CD14-positive monocyte (primary cell): ENCODE measurements at regions of chr6 and their contacts with region 1.

Region 1: GRCh38 chr6:134640975-134641429 is 308.9 kb downstream of the ALDH8A1 start:
- DNase-seq: peak; percentile 97 to 99 (median 97)
- H3K4me3 ChIP-seq: no peak overlapping the region
- H3K4me3 Mint-ChIP-seq: no peak overlapping the region
- H3K27ac ChIP-seq: peak overlapping the region; percentile 58 to 76
- H3K27ac Mint-ChIP-seq: peak overlapping the region; percentile 84 to 98 (median 92)
- H3K4me1 ChIP-seq: peaks cover 12 to 14% of the 10 kb centered on the region in 2 donors
- H3K4me1 Mint-ChIP-seq: peaks cover 15% of the 10 kb centered on the region
- H3K27me3 ChIP-seq: no peaks in the 10 kb centered on the region
- H3K27me3 Mint-ChIP-seq: peaks cover 0 to 2% (median 2%) of the 10 kb centered on the region in 3 donors
- CTCF ChIP-seq: peak; percentile 93

Region 2: DNA sequence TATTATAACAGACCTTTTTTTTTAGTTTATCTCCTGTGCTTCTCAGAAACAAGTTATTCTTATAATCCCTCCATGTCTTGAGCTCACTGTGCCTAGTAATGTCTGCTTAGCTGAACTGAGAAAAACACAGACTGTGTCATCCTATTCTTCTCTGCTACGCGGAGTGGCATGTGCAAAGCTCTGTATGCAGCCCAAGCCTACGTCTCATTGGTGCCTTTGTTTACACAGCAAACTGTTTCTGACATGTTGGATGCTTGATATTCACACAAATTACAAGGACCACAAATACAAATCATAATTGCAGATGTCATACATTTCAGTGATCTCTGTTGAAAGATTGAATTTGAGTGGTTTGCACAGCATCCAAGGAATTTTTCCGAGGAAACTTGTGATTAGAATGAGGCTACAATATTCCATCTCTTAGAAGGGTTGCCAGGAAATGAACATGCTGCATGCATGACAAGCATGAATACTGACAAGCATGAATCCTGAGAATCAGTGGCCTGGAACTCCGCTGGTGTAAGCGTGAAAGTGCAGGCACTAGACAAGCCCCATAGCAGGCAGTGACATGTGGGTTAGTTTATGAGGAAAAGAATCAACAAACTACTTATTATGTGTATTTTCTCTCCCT is 194.7 kb before region 1 on chr6:
- intact Hi-C with region 1: loop called in 1 of 2 experiments (anchors 10 kb)
- DNase-seq: no peak
- H3K4me3 ChIP-seq: no peak overlapping the region
- H3K4me3 Mint-ChIP-seq: no peak overlapping the region
- H3K27ac ChIP-seq: no peak overlapping the region
- H3K27ac Mint-ChIP-seq: peak overlapping the region in 5 of 7 donors; percentile 1 to 77 (median 67)
- H3K4me1 ChIP-seq: peaks cover 14 to 18% of the 10 kb centered on the region in 2 donors
- H3K4me1 Mint-ChIP-seq: peaks cover 22% of the 10 kb centered on the region
- H3K27me3 ChIP-seq: no peaks in the 10 kb centered on the region
- H3K27me3 Mint-ChIP-seq: peaks cover 0 to 1% (median 0%) of the 10 kb centered on the region in 3 donors
- CTCF ChIP-seq: no peak

Region 3: GRCh38 chr6:134491477-134491876 is 149.5 kb before region 1 on chr6:
- intact Hi-C with region 1: no loop called
- DNase-seq: no peak
- H3K4me3 ChIP-seq: no peak overlapping the region
- H3K4me3 Mint-ChIP-seq: no peak overlapping the region
- H3K27ac ChIP-seq: no peak overlapping the region
- H3K27ac Mint-ChIP-seq: no peak overlapping the region
- H3K4me1 ChIP-seq: no peaks in the 10 kb centered on the region
- H3K4me1 Mint-ChIP-seq: no peaks in the 10 kb centered on the region
- H3K27me3 ChIP-seq: no peaks in the 10 kb centered on the region
- H3K27me3 Mint-ChIP-seq: peaks cover 0 to 2% (median 1%) of the 10 kb centered on the region in 3 donors
- CTCF ChIP-seq: no peak

Region 4: GRCh38 chr6:134609716-134610261 is 31.2 kb before region 1 on chr6:
- intact Hi-C with region 1: no loop called
- DNase-seq: no peak
- H3K4me3 ChIP-seq: no peak overlapping the region
- H3K4me3 Mint-ChIP-seq: no peak overlapping the region
- H3K27ac ChIP-seq: no peak overlapping the region
- H3K27ac Mint-ChIP-seq: no peak overlapping the region
- H3K4me1 ChIP-seq: no peaks in the 10 kb centered on the region
- H3K4me1 Mint-ChIP-seq: no peaks in the 10 kb centered on the region
- H3K27me3 ChIP-seq: no peaks in the 10 kb centered on the region
- H3K27me3 Mint-ChIP-seq: peaks cover 0 to under 1% (median 0%) of the 10 kb centered on the region in 3 donors
- CTCF ChIP-seq: no peak

Region 5: GRCh38 chr6:134663800-134664535 is 23.0 kb after region 1 on chr6:
- intact Hi-C with region 1: loop called in 1 of 2 experiments (anchors 2 kb)
- DNase-seq: no peak
- H3K4me3 ChIP-seq: no peak overlapping the region
- H3K4me3 Mint-ChIP-seq: no peak overlapping the region
- H3K27ac ChIP-seq: no peak overlapping the region
- H3K27ac Mint-ChIP-seq: no peak overlapping the region
- H3K4me1 ChIP-seq: peaks cover 17 to 23% of the 10 kb centered on the region in 2 donors
- H3K4me1 Mint-ChIP-seq: peaks cover 20% of the 10 kb centered on the region
- H3K27me3 ChIP-seq: no peaks in the 10 kb centered on the region
- H3K27me3 Mint-ChIP-seq: peaks cover 0 to 2% (median 1%) of the 10 kb centered on the region in 3 donors
- CTCF ChIP-seq: no peak

Region 6: GRCh38 chr6:134678436-134678889 is 37.5 kb after region 1 on chr6:
- intact Hi-C with region 1: no loop called
- DNase-seq: no peak
- H3K4me3 ChIP-seq: no peak overlapping the region
- H3K4me3 Mint-ChIP-seq: no peak overlapping the region
- H3K27ac ChIP-seq: no peak overlapping the region
- H3K27ac Mint-ChIP-seq: no peak overlapping the region
- H3K4me1 ChIP-seq: no peaks in the 10 kb centered on the region
- H3K4me1 Mint-ChIP-seq: peaks cover 3% of the 10 kb centered on the region
- H3K27me3 ChIP-seq: no peaks in the 10 kb centered on the region
- H3K27me3 Mint-ChIP-seq: peaks cover 0 to 2% (median 1%) of the 10 kb centered on the region in 3 donors
- CTCF ChIP-seq: no peak